ENCODE measurements at regions of chr12 and their contacts with region 1.

Region 1: GRCh38 chr12:9707864-9708808 is 24.8 kb downstream of the CLECL1 start:
- DNase-seq: peak in 2 of 3 donors; percentile 44 to 54
- ATAC-seq: peak; percentile 72 to 89 (median 82)
- H3K4me3 ChIP-seq: no peak overlapping the region
- H3K27ac ChIP-seq: no peak overlapping the region
- H3K4me1 ChIP-seq: no peaks in the 10 kb centered on the region
- H3K27me3 ChIP-seq: no peaks in the 10 kb centered on the region
- CTCF ChIP-seq: peak; percentile 74 to 81 (median 80)
- POLR2A ChIP-seq: no peak

Region 2: DNA sequence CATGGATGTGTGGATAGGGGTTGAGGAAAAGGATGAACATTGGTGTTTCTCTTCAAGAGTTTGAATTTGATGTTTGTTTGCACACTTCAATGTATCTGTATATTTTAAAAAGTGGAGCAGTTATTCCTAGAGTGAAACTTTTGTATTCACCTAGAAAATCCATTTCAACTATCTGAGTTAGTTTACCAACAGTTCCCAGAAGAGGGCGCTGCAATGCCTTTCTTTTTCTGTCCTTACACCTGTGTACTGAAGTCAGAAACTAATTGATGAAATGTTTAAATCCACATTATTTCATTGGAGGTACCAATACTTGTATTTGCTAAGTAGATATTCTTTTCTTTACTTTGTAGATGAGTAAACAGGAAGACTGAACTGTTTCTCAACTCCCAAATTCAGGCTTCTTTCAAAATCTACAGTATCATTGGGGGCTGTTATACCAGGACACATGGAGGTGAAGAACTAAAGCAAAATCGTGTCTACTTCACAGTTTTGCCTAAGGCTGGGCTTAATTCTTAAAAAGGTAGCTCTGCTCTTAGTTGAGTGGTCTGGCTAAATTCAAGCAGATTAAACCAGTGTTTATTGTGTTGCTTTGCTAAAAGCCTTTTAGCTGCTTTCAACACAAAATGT is 73.8 kb before region 1 on chr12:
- intact Hi-C with region 1: loop called in 1 of 2 experiments (anchors 5 kb)
- DNase-seq: no peak
- ATAC-seq: peak in 3 of 4 donors; percentile 49 to 79 (median 70)
- H3K4me3 ChIP-seq: no peak overlapping the region
- H3K27ac ChIP-seq: no peak overlapping the region
- H3K4me1 ChIP-seq: no peaks in the 10 kb centered on the region
- H3K27me3 ChIP-seq: no peaks in the 10 kb centered on the region
- CTCF ChIP-seq: peak; percentile 51 to 73 (median 70)
- POLR2A ChIP-seq: no peak

Region 3: GRCh38 chr12:10088955-10089900 is 381.1 kb after region 1 on chr12:
- intact Hi-C with region 1: no loop called
- DNase-seq: peak; percentile 55 to 83 (median 56)
- ATAC-seq: peak; percentile 72 to 96 (median 93)
- H3K4me3 ChIP-seq: no peak overlapping the region
- H3K27ac ChIP-seq: peak overlapping the region in 1 of 3 donors; percentile 16
- H3K4me1 ChIP-seq: peaks cover 0 to 17% (median 0%) of the 10 kb centered on the region in 4 donors
- H3K27me3 ChIP-seq: no peaks in the 10 kb centered on the region
- CTCF ChIP-seq: no peak
- POLR2A ChIP-seq: no peak

Measured in right lobe of liver (tissue), 6 donors.